Posterior cingulate gyrus (tissue), 11 donors: ENCODE measurements at regions of chr3 and their contacts with region 1.

Region 1: DNA sequence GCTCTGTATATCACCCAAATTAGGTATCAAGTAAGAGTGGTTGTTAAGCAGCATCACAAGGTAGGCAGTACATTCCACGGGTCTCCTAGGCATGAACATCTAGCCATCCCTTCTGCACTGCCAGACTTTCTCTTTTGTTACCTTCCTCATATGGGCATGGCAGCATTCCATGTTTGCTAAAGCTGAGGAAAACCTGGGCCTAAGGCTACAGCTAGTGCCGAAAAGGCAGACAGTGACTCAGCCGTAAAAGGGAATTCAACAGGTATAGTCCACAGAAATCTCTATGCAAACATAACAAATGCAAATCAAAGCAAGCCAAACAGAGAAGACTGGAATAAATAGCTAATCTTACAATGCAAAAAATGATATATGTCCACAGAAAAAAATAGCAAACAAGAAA is 645.4 kb downstream of the ZBBX start:
- DNase-seq: no peak

Region 2: DNA sequence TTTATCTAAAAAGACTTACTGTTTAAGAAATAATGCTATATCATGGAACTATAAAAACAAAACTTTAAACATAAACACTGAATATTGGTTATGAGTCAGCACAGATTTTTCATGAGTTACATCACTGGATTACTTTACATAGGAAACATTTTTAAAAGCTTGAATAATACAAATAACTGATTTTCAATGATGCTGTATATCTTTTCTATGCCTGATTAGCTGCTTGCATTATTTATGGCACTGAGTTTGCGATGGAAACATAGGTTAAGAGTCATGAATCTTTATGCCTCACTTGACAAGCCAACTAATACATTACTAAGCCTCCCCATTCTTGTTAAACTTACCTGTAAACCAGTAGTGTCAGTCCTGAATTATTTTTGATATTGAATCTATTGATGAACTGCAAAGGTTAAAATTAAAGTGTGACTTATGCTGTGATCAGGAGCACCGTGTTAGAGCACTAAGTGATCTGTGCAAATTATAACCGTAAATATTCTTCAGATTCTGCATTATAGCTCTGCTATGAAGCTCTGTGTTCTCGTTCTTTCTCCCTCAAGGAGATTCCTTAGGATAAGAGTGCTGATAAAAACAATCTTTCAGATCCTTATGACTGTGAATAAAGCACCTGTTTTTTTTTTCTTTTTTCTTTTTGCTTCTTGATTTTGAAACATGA is 460.2 kb before region 1 on chr3:
- intact Hi-C with region 1: no loop called
- DNase-seq: no peak

Region 3: DNA sequence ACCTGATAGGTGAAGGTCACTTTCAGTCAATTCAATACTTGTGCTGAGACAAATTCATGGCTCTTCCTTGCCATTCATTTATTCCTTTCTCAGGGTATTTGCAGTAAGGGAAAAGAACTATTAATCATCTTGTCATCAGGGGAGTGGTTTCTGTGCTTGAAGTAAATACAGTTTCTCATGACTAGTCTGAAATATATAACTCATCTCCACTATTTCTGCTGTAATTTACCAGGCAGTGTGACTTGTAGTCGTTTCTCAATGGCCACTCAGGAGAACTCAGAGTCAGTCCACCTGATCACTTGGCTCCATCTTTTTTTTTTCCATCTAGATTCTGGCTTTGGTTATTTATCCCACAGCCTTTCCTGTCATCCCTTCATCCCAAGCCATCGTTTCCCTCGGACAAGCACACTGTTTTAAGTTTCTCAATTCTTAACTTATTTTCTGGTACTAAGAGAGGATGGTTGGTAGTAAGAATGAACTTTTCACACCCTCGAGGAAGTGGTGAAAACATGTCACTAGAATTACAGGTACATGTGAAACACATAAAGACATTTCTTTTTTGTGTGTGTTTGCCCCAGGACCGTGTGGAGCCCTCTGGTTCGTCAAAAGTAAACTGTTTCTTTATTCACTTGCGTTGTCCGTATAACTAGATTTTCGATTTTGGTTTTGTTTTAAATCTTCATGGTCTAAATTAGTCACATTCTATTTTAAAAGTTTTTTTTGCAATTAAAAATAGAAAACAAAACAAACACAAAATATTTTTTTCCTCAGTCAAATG is 25.2 kb after region 1 on chr3:
- intact Hi-C with region 1: loop called (anchors 1 kb)
- DNase-seq: no peak